ENCODE measurements at regions of chr2 and their contacts with region 1.

Region 1: GRCh38 chr2:218357236-218358159 is 841 bp downstream of the CATIP start:
- DNase-seq: peak in 2 of 6 donors; percentile 35 to 45
- ATAC-seq: peak in 3 of 4 donors; percentile 4 to 13 (median 8)
- H3K4me3 ChIP-seq: peak overlapping the region in 1 of 4 donors; percentile 23
- H3K27ac ChIP-seq: peak overlapping the region; percentile 39 to 71 (median 62)
- H3K4me1 ChIP-seq: no peaks in the 10 kb centered on the region
- H3K27me3 ChIP-seq: no peaks in the 10 kb centered on the region
- CTCF ChIP-seq: no peak

Region 2: GRCh38 chr2:218301176-218301819 is 56.2 kb before region 1 on chr2:
- intact Hi-C with region 1: loop called in 2 of 3 experiments (anchors 2 to 5 kb)
- DNase-seq: peak; percentile 85 to 93 (median 86)
- ATAC-seq: peak; percentile 79 to 98 (median 95)
- H3K4me3 ChIP-seq: no peak overlapping the region
- H3K27ac ChIP-seq: no peak overlapping the region
- H3K4me1 ChIP-seq: peaks cover 0 to 12% (median 6%) of the 10 kb centered on the region in 3 donors
- H3K27me3 ChIP-seq: no peaks in the 10 kb centered on the region
- CTCF ChIP-seq: peak; percentile 84 to 99 (median 96)

Measured in pancreas (tissue), 10 donors.